ENCODE measurements at regions of chr6 and their contacts with region 1.

Region 1: GRCh38 chr6:43228951-43229802 is at the start of gene DNPH1:
- H3K4me3 ChIP-seq: peak within 1 kb of the TSS; percentile 87
- H3K27ac ChIP-seq: peak within 1 kb of the TSS; percentile 66
- H3K4me1 ChIP-seq: no peaks in the 10 kb centered on the region; the same call in 1 of the 2 replicates
- CTCF ChIP-seq: peak; percentile 75

Region 2: GRCh38 chr6:43174263-43175112 is 54.7 kb before region 1 on chr6:
- CTCF ChIA-PET with region 1: interaction called, 11 read pairs
- POLR2A ChIA-PET with region 1: interaction called, 5 read pairs
- H3K4me3 ChIP-seq: peak overlapping the region; percentile 43
- H3K27ac ChIP-seq: peak overlapping the region; percentile 98
- H3K4me1 ChIP-seq: peaks cover 15% of the 10 kb centered on the region
- CTCF ChIP-seq: peak; percentile 65

Region 3: GRCh38 chr6:43216200-43216599 is 13.0 kb before region 1 on chr6:
- CTCF ChIA-PET with region 1: interaction called, 21 read pairs
- POLR2A ChIA-PET with region 1: interaction called, 16 read pairs
- H3K4me3 ChIP-seq: no peak overlapping the region
- H3K27ac ChIP-seq: no peak overlapping the region
- H3K4me1 ChIP-seq: no peaks in the 10 kb centered on the region
- CTCF ChIP-seq: no peak

Region 4: GRCh38 chr6:43240950-43241349 is 11.8 kb after region 1 on chr6:
- CTCF ChIA-PET with region 1: interaction called, 25 read pairs
- POLR2A ChIA-PET with region 1: interaction called, 5 read pairs
- H3K4me3 ChIP-seq: no peak overlapping the region
- H3K27ac ChIP-seq: no peak overlapping the region
- H3K4me1 ChIP-seq: no peaks in the 10 kb centered on the region
- CTCF ChIP-seq: no peak

Region 5: DNA sequence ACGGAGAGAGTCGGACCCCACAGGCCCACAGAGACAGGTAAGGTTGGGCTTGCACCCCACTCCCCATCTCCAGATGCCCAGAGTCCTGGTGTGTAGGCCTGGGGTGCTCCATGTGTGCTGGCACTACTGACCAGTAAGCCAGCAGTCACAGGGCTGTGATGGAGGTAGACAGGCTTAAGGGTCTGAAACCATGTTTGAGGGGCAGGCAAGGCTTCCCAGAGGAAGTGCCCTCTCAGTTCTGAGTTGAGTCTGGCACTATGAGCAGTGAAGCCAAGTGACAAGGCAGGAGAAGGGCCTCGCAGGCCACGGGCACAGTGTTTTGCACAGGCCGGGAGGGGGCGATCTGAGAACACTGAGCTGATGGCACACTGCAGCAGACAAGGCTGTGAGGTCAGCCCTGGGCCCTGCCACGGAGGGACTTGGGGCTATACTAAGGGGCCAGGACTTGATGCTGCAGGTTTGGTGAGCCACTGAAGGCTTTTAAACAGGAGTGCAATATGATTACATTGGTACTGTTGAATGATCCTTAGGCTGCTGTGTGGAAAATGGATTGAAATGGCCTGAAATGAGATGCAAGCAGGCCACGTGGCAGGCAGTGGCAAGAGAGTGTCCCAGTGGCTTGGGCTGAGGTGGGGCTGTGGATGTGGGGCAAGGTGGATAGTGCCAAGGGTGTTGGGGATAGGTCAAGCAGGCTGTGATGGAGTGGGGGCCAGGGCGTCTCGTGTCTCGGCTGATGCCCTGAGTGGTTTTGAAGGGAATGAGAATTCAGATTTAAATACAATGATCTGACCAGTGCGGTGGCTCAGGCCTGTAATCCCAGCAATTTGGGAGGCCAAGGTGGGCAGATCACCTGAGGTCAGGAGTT is 34.4 kb after region 1 on chr6:
- CTCF ChIA-PET with region 1: interaction called, 20 read pairs
- POLR2A ChIA-PET with region 1: no interaction called
- H3K4me3 ChIP-seq: no peak overlapping the region
- H3K27ac ChIP-seq: no peak overlapping the region
- H3K4me1 ChIP-seq: no peaks in the 10 kb centered on the region
- CTCF ChIP-seq: peak; percentile 88

Region 6: GRCh38 chr6:43798688-43799444 is 569.7 kb after region 1 on chr6:
- CTCF ChIA-PET with region 1: no interaction called
- POLR2A ChIA-PET with region 1: no interaction called
- H3K4me3 ChIP-seq: no peak overlapping the region
- H3K27ac ChIP-seq: no peak overlapping the region
- H3K4me1 ChIP-seq: no peaks in the 10 kb centered on the region
- CTCF ChIP-seq: no peak